Dendritic cell treated with granulocyte-macrophage colony-stimulating factor and Interleukin-4, amounts not matched to agents 40 ng/mL and 50 ng/mL, for 4 days (primary cell): ENCODE measurements at regions of chr17 and their contacts with region 1.

Region 1: DNA sequence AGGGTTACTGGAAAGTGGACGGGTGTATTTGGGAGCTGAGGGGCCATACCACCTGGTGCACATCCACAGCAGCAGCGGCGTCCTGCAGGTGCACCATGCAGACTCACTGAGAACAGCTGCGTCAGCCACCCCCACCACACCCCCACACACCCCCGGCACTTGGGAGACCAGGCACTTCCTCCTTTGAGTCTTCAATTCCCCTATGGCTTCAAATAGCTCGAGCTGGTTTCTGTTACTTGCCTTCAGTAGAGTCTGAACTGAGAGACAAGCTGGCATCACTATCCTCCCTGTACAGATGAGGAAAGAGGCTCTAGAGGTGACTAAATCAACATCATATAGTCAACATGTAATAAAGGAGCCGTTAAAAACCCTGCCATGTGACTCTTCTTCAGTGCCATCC is 15.4 kb downstream of the CUEDC1 start:
- H3K4me3 Mint-ChIP-seq: no peak overlapping the region
- H3K27ac Mint-ChIP-seq: peak overlapping the region; percentile 25
- H3K4me1 Mint-ChIP-seq: peaks cover 85% of the 10 kb centered on the region
- H3K27me3 Mint-ChIP-seq: no peaks in the 10 kb centered on the region

Region 2: GRCh38 chr17:57955183-57955931 is 15.6 kb after region 1 on chr17 and contains the start of gene CUEDC1:
- intact Hi-C with region 1: loop called (anchors 2 kb)
- H3K4me3 Mint-ChIP-seq: peak within 1 kb of the TSS; percentile 77
- H3K27ac Mint-ChIP-seq: peak within 1 kb of the TSS; percentile 97
- H3K4me1 Mint-ChIP-seq: peaks cover 64% of the 10 kb centered on the region
- H3K27me3 Mint-ChIP-seq: peaks cover 36% of the 10 kb centered on the region